Posterior vena cava (tissue), 2 donors: ENCODE measurements at regions of chr12 and their contacts with region 1.

Region 1: DNA sequence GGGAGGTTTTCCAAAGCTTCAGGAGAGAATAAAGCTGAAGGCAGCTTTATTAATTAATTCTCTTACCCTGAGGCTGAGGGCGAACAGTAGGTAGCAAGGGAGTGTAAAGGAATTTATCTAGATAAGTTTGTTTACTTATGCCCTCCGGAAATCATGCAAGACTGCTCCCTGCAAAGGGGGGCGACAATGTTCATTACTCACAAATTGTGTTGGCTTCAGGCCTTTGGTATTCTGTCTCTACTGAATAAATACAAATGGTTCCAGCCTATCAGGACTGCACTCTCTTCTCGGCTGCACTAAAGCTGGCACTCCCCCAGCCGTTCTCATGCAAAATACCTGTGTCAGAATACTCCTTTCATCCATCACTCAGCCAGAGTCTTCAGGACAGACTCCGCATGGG is 120.8 kb downstream of the PPHLN1 start:
- DNase-seq: no peak

Region 2: DNA sequence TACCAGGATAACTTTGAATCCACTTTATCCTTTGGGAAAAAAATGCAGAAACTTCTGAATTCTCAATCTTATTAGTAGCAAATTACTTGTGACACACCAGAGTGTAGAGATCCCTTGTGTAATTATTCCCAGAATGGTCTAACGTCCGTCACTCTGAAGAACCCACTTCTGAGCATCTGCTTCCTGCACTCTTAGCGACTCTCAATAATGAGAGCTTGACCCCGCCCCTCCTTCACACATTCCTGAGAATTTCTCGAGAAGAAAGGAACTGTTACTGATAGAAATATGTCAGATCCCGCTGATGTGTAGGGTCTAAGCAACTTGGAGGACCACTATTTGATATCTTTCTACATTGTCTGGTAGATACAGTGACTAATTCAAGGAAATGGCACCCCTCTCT is 1477.0 kb before region 1 on chr12:
- intact Hi-C with region 1: loop called in 1 of 2 experiments (anchors 5 kb)
- DNase-seq: no peak